PC-3 (cell line): ENCODE measurements at regions of chr2 and their contacts with region 1.

Region 1: DNA sequence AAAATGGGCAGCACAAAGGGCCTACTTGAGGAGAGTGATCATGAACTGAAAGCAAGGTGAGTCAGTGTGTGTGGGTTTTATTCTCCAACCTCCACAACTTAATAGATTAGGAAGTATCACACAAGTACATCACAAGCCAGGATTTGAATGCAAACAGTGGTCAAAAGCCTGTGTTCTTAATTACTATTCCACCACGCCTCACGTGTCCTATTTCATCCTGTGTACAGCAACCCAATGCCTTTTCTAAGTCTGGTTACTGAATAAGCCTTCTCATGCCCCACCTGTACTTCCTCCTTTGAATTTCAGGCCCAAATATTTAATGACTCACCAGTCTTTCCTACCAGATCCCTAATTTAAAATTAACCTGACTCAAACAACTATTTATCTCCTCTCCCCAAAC is 755.7 kb upstream of the SLC8A1 start:
- DNase-seq: peak; percentile 72
- ATAC-seq: peak; percentile 69
- H3K4me3 ChIP-seq: no peak overlapping the region
- H3K27ac ChIP-seq: peak overlapping the region; percentile 49
- H3K4me1 ChIP-seq: peaks cover 31% of the 10 kb centered on the region
- H3K27me3 ChIP-seq: no peaks in the 10 kb centered on the region
- CTCF ChIP-seq: no peak

Region 2: DNA sequence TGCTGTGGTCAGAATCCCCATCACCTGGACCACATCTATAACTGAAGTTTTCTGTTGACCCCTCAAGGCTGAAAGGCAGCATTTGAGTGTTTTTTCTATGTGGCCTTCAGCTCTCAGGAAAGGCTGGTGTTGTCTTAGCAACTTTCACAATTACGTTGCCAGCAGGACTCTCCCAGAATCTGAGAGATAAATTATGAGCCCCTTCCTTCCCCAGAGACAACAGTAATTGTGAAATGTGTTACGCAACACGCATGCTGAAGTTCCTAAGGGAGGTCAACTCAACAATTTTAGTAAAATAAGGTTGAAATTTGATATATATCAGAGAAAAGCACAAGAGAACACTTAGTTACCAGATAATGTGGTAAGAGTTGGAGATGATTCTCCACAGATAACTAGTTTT is 539.2 kb before region 1 on chr2:
- CTCF ChIA-PET with region 1: no interaction called
- POLR2A ChIA-PET with region 1: no interaction called
- intact Hi-C with region 1: no loop called
- DNase-seq: no peak
- ATAC-seq: no peak
- H3K4me3 ChIP-seq: no peak overlapping the region
- H3K27ac ChIP-seq: no peak overlapping the region
- H3K4me1 ChIP-seq: no peaks in the 10 kb centered on the region
- H3K27me3 ChIP-seq: no peaks in the 10 kb centered on the region
- CTCF ChIP-seq: no peak

Region 3: GRCh38 chr2:40877734-40878288 is 329.8 kb before region 1 on chr2:
- CTCF ChIA-PET with region 1: no interaction called
- POLR2A ChIA-PET with region 1: no interaction called
- intact Hi-C with region 1: loop called (anchors 10 kb)
- DNase-seq: peak; percentile 69
- ATAC-seq: peak; percentile 68
- H3K4me3 ChIP-seq: no peak overlapping the region
- H3K27ac ChIP-seq: peak overlapping the region; percentile 78
- H3K4me1 ChIP-seq: peaks cover 34% of the 10 kb centered on the region
- H3K27me3 ChIP-seq: no peaks in the 10 kb centered on the region
- CTCF ChIP-seq: no peak

Region 4: DNA sequence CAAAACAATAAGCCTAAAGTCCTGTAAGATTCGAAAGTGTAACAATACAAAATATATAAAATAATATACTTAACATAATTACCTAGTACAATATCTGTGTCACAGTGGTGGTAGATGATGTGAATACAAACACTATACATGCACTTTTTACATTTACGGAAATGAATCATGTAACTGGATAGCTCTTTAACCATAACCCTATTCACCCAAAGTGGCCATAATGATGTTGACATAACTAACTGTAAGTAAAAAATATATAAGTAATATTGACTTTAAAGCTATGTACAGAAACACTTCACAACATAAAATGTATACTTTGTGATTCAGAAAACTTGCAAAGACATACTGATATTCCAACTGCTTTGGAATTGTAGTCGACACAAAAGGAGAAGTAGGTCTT is 138.8 kb before region 1 on chr2:
- CTCF ChIA-PET with region 1: no interaction called
- POLR2A ChIA-PET with region 1: no interaction called
- intact Hi-C with region 1: loop called (anchors 5 kb)
- DNase-seq: peak; percentile 72
- ATAC-seq: peak; percentile 88
- H3K4me3 ChIP-seq: no peak overlapping the region
- H3K27ac ChIP-seq: peak overlapping the region; percentile 77
- H3K4me1 ChIP-seq: peaks cover 32% of the 10 kb centered on the region
- H3K27me3 ChIP-seq: no peaks in the 10 kb centered on the region
- CTCF ChIP-seq: no peak

Region 5: DNA sequence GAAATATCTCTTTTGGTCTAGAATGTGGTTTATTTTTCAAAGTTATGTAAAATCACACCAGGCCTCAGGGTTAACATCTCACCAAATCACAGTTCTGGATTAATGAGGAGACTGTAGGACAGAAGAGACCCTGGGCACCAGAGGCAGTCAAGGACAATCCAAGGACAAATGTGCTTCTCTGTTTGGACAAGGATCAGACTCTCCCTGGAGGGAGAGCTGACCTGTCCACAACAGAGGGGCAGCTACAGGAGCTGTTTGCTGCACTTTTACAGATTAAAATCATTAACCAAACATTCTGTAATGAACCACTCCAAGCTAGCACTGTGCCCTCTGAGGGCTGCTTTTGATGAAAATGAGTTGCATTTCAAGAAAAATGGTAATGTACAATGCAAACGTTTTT is 65.1 kb before region 1 on chr2:
- CTCF ChIA-PET with region 1: no interaction called
- POLR2A ChIA-PET with region 1: no interaction called
- intact Hi-C with region 1: loop called (anchors 1 kb)
- DNase-seq: no peak
- ATAC-seq: peak; percentile 5
- H3K4me3 ChIP-seq: no peak overlapping the region
- H3K27ac ChIP-seq: peak overlapping the region; percentile 55
- H3K4me1 ChIP-seq: peaks cover 17% of the 10 kb centered on the region
- H3K27me3 ChIP-seq: no peaks in the 10 kb centered on the region
- CTCF ChIP-seq: no peak

Region 6: GRCh38 chr2:41169744-41170143 is 37.8 kb before region 1 on chr2:
- CTCF ChIA-PET with region 1: no interaction called
- POLR2A ChIA-PET with region 1: no interaction called
- intact Hi-C with region 1: no loop called
- DNase-seq: no peak
- ATAC-seq: no peak
- H3K4me3 ChIP-seq: no peak overlapping the region
- H3K27ac ChIP-seq: no peak overlapping the region
- H3K4me1 ChIP-seq: no peaks in the 10 kb centered on the region
- H3K27me3 ChIP-seq: no peaks in the 10 kb centered on the region
- CTCF ChIP-seq: no peak

Region 7: GRCh38 chr2:41400088-41400665 is 192.6 kb after region 1 on chr2:
- CTCF ChIA-PET with region 1: no interaction called
- POLR2A ChIA-PET with region 1: no interaction called
- intact Hi-C with region 1: loop called (anchors 5 kb)
- DNase-seq: peak; percentile 51
- ATAC-seq: peak; percentile 58; the same call in 1 of the 2 replicates
- H3K4me3 ChIP-seq: no peak overlapping the region
- H3K27ac ChIP-seq: no peak overlapping the region
- H3K4me1 ChIP-seq: no peaks in the 10 kb centered on the region
- H3K27me3 ChIP-seq: no peaks in the 10 kb centered on the region
- CTCF ChIP-seq: peak; percentile 71